CD4-positive, alpha-beta memory T cell (primary cell): ENCODE measurements at regions of chr5 and their contacts with region 1.

Region 1: DNA sequence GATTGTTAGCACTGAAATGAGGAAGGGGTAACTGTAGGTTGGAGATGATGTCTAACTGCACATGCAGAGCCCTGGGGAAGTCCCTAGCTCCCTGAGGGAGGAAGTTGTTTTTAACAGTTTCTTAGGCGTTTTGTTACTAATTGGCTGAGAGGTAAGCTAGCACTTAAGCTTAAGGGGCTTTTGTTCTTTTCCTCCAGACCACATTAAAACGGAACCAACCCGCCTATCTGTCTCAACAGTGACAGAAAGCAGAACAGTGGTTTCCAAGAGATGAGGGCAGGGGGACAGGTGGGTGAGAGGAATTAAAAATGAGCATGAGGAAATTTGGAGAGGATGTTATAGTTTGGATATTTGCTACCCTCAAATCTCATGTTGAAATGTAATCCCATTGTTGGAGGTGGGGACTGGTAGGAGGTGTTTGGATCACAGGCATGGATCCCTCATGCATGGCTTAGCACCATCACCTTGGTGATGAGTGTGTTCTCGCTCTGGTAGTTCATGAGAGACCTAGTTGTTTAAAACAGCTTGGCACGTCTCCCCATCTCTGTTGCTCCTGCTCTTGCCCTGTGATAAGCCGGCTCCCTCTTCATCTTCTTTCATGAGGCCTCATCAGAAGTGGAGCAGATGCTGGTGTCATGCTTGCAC is 38.9 kb downstream of the LYRM7 start:
- DNase-seq: peak; percentile 78 to 87 (median 81)
- H3K4me3 ChIP-seq: peak overlapping the region in 1 of 2 donors; percentile 16
- H3K4me3 Mint-ChIP-seq: peak overlapping the region; percentile 58 to 89 (median 84)
- H3K27ac ChIP-seq: peak overlapping the region; percentile 75
- H3K27ac Mint-ChIP-seq: peak overlapping the region; percentile 91 to 99 (median 98)
- H3K4me1 ChIP-seq: peaks cover 57% of the 10 kb centered on the region
- H3K4me1 Mint-ChIP-seq: peaks cover 39 to 59% (median 50%) of the 10 kb centered on the region in 4 donors
- H3K27me3 ChIP-seq: no peaks in the 10 kb centered on the region
- H3K27me3 Mint-ChIP-seq: no peaks in the 10 kb centered on the region

Region 2: GRCh38 chr5:131170540-131171275 is 38.9 kb before region 1 on chr5 and contains the start of gene LYRM7:
- CTCF ChIA-PET with region 1: no interaction called
- POLR2A ChIA-PET with region 1: interaction called, 5 read pairs
- intact Hi-C with region 1: loop called (anchors 2 kb)
- DNase-seq: peak; percentile 94 to 99 (median 97)
- H3K4me3 ChIP-seq: peak within 1 kb of the TSS; percentile 67 to 69
- H3K4me3 Mint-ChIP-seq: peak within 1 kb of the TSS; percentile 95 to 100 (median 98)
- H3K27ac ChIP-seq: peak within 1 kb of the TSS; percentile 88
- H3K27ac Mint-ChIP-seq: peak within 1 kb of the TSS; percentile 91 to 99 (median 97)
- H3K4me1 ChIP-seq: peaks cover 31% of the 10 kb centered on the region
- H3K4me1 Mint-ChIP-seq: peaks cover 33 to 72% (median 54%) of the 10 kb centered on the region in 4 donors
- H3K27me3 ChIP-seq: no peaks in the 10 kb centered on the region
- H3K27me3 Mint-ChIP-seq: no peaks in the 10 kb centered on the region
- total RNA-seq, gene LYRM7: 16.7 to 18.4 TPM

Region 3: GRCh38 chr5:131224387-131225201 is 15.0 kb after region 1 on chr5:
- CTCF ChIA-PET with region 1: interaction called, 5 read pairs
- POLR2A ChIA-PET with region 1: interaction called, 8 read pairs
- intact Hi-C with region 1: loop called (anchors 2 kb)
- DNase-seq: peak in 4 of 5 donors; percentile 13 to 43 (median 28)
- H3K4me3 ChIP-seq: no peak overlapping the region
- H3K4me3 Mint-ChIP-seq: no peak overlapping the region
- H3K27ac ChIP-seq: peak overlapping the region; percentile 16
- H3K27ac Mint-ChIP-seq: no peak overlapping the region
- H3K4me1 ChIP-seq: peaks cover 25% of the 10 kb centered on the region
- H3K4me1 Mint-ChIP-seq: peaks cover 0 to 4% (median under 1%) of the 10 kb centered on the region in 4 donors
- H3K27me3 ChIP-seq: no peaks in the 10 kb centered on the region
- H3K27me3 Mint-ChIP-seq: no peaks in the 10 kb centered on the region

Region 4: GRCh38 chr5:131258733-131259132 is 49.1 kb after region 1 on chr5:
- CTCF ChIA-PET with region 1: interaction called, 3 read pairs
- POLR2A ChIA-PET with region 1: interaction called, 45 read pairs
- intact Hi-C with region 1: no loop called
- DNase-seq: no peak
- H3K4me3 ChIP-seq: peak overlapping the region in 1 of 2 donors; percentile 35
- H3K4me3 Mint-ChIP-seq: peak overlapping the region; percentile 76 to 91 (median 82)
- H3K27ac ChIP-seq: peak overlapping the region; percentile 64
- H3K27ac Mint-ChIP-seq: peak overlapping the region; percentile 91 to 97 (median 94)
- H3K4me1 ChIP-seq: peaks cover 78% of the 10 kb centered on the region
- H3K4me1 Mint-ChIP-seq: peaks cover 48 to 85% (median 64%) of the 10 kb centered on the region in 4 donors
- H3K27me3 ChIP-seq: no peaks in the 10 kb centered on the region
- H3K27me3 Mint-ChIP-seq: no peaks in the 10 kb centered on the region